ENCODE measurements at regions of chr11 and their contacts with region 1.

Region 1: DNA sequence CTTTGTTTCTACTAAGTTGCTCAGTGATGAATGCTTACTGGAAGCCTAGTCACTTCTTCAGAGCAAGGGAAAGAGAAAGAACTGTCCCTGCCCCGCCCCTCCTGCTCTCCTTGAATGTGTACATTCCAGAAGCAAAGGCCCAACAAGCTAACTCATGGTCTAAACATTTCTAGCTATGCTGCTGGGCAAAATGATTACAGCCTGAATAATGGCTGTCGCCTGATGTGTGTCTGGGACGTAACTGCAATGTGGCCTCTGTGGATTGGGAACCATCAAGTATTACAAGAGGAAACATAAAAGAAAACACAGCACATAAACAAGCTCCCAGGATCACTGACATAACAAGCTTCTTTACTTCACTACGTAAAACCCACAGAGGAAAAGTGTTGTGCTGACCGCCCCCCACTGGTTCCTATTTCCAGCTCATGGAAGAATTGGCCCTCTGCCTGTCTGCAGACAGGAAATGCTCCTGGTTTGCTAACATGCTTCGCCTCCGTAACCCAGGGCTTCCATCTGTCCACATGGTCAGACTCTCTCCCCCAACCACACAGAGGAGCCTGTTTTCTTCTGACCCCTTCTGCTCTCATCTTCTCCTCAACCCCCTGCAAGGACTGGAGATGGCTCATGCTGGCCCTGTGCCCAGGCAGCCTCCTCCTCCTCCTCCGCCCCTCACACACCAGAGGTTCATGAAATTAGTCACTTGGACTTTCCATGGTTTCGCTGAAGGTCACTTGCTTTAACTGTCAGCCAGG is 187.2 kb downstream of the MAML2 start:
- DNase-seq: peak; percentile 97
- ATAC-seq: peak; percentile 79
- H3K4me3 ChIP-seq: peak overlapping the region; percentile 8; the same call in 1 of the 2 replicates
- H3K27ac ChIP-seq: peak overlapping the region; percentile 86
- H3K4me1 ChIP-seq: peaks cover 26% of the 10 kb centered on the region
- H3K27me3 ChIP-seq: no peaks in the 10 kb centered on the region
- CTCF ChIP-seq: peak; percentile 41
- POLR2A ChIP-seq: peak; percentile 43; the same call in 1 of the 2 replicates
- RAD21 ChIP-seq: peak; percentile 29

Region 2: DNA sequence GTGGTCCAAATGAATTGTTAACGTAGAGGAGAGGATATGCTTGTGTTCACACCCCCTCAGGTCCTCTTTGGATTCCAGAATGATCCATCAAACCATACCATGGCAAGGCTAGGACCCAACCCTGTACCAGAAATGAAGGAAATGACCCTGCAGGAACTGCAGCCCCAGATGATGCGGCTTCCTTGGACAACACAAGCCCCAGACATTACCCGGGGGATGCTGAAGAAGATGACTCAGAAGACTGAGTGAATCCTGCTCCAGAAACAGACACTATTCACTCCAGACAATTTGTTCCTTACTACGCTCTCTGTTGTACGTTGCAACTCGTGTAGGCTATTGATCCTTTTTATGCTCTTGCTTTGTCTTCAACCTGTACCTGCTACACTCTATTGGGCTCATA is 216.7 kb before region 1 on chr11:
- CTCF ChIA-PET with region 1: no interaction called
- POLR2A ChIA-PET with region 1: no interaction called
- dilution Hi-C with region 1: no loop called
- in situ Hi-C with region 1: no loop called
- intact Hi-C with region 1: no loop called
- DNase-seq: peak; percentile 35
- ATAC-seq: no peak
- H3K4me3 ChIP-seq: no peak overlapping the region
- H3K27ac ChIP-seq: no peak overlapping the region
- H3K4me1 ChIP-seq: no peaks in the 10 kb centered on the region
- H3K27me3 ChIP-seq: no peaks in the 10 kb centered on the region
- CTCF ChIP-seq: no peak
- POLR2A ChIP-seq: no peak
- RAD21 ChIP-seq: no peak

Region 3: DNA sequence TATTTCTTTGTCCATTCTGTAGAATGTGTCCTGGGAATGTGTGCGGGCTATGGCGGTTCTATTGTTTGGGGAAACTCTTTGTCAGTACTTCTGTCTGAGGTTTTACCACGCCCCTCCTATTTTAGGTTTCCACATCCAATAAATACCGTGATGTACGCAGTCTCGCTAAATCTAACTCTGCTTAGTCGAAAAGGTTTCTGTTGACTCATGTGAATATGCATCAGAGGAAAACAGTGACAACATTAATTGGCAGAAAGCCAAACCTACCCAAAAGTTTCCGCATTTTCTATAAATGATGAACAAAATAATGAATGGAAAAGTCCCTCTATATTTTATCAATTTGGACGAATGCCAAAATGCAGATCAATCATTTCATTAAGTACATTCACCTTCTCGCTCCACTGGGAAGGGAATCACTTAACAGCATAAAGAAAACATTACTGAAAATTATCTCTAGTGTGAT is 43.8 kb after region 1 on chr11:
- CTCF ChIA-PET with region 1: no interaction called
- POLR2A ChIA-PET with region 1: no interaction called
- dilution Hi-C with region 1: no loop called
- in situ Hi-C with region 1: no loop called
- intact Hi-C with region 1: loop called (anchors 1 kb)
- DNase-seq: peak; percentile 80
- ATAC-seq: no peak; the same call in 1 of the 2 replicates
- H3K4me3 ChIP-seq: no peak overlapping the region
- H3K27ac ChIP-seq: peak overlapping the region; percentile 69; the same call in 1 of the 2 replicates
- H3K4me1 ChIP-seq: peaks cover 19% of the 10 kb centered on the region
- H3K27me3 ChIP-seq: no peaks in the 10 kb centered on the region
- CTCF ChIP-seq: no peak
- POLR2A ChIP-seq: no peak
- RAD21 ChIP-seq: no peak